ENCODE measurements at regions of chr1 and their contacts with region 1.

Region 1: GRCh38 chr1:91282695-91283420 is 121.8 kb downstream of the HFM1 start:
- DNase-seq: peak; percentile 57
- H3K4me3 Mint-ChIP-seq: no peak overlapping the region
- H3K27ac Mint-ChIP-seq: no peak overlapping the region
- H3K4me1 Mint-ChIP-seq: no peaks in the 10 kb centered on the region
- H3K27me3 Mint-ChIP-seq: peaks cover 11% of the 10 kb centered on the region

Region 2: GRCh38 chr1:91929250-91929649 is 646.4 kb after region 1 on chr1:
- CTCF ChIA-PET with region 1: interaction called, 10 read pairs
- DNase-seq: no peak
- H3K4me3 Mint-ChIP-seq: no peak overlapping the region
- H3K27ac Mint-ChIP-seq: no peak overlapping the region
- H3K4me1 Mint-ChIP-seq: peaks cover 5% of the 10 kb centered on the region
- H3K27me3 Mint-ChIP-seq: no peaks in the 10 kb centered on the region

Measured in activated naive CD4-positive, alpha-beta T cell treated with anti-CD3 and anti-CD28 coated beads, Interleukin-2, amount 10 ng/mL, durations not matched to agents 7 days and 5 days (primary cell).